ENCODE measurements at regions of chr1 and their contacts with region 1.

Region 1: DNA sequence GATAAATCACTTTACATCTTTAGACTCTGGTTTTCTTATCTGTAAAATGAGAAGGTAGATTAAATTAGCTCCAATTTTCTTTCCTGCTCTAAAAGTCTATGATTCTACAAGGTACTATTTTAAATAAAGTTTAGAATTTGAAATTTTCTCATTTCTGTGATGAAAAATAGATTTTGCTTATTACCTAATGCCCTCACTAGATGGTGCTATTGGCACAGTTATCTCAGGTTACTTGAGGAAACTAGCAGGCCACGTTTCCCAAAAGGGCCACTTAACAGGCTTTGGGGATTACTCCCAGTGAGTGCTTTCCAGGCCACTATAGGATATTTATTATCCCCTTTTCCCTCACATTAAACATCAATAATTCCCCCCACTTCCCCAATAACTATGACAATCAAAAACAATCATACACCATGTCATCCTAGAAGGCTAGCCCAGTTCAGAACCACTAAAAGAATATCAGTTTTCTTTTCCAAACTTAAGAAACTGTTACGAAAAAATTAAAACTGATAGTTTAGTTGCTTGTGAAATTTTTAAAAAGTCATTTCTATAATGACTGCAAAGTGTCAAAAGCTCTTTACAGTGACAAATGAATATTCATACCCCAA is 30.6 kb downstream of the OMA1 start:
- DNase-seq: peak; percentile 71 to 81 (median 78)
- H3K4me3 ChIP-seq: no peak overlapping the region
- H3K27ac ChIP-seq: no peak overlapping the region
- H3K4me1 ChIP-seq: no peaks in the 10 kb centered on the region
- H3K27me3 ChIP-seq: no peaks in the 10 kb centered on the region

Region 2: DNA sequence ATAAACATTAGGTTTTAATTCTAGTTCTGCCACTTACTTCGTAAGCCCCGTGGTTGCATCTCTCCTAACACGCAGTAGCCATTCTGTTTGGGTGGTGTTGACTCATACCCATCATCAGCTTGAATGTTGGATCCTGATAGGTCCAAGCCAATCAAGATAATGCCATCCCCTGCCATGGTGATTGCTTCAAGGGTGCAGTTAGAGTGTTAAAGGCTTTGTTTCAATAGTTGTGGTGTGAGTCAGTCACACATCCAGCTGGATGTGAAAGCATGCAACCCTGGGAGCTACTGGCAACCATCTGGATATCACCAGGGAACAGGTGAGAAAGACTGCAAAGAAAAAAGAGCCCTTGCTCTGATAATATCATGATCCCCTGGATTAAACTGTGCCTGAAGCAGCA is 38.5 kb before region 1 on chr1:
- CTCF ChIA-PET with region 1: no interaction called
- POLR2A ChIA-PET with region 1: no interaction called
- DNase-seq: no peak
- H3K4me3 ChIP-seq: no peak overlapping the region
- H3K27ac ChIP-seq: no peak overlapping the region
- H3K4me1 ChIP-seq: no peaks in the 10 kb centered on the region
- H3K27me3 ChIP-seq: no peaks in the 10 kb centered on the region

Region 3: DNA sequence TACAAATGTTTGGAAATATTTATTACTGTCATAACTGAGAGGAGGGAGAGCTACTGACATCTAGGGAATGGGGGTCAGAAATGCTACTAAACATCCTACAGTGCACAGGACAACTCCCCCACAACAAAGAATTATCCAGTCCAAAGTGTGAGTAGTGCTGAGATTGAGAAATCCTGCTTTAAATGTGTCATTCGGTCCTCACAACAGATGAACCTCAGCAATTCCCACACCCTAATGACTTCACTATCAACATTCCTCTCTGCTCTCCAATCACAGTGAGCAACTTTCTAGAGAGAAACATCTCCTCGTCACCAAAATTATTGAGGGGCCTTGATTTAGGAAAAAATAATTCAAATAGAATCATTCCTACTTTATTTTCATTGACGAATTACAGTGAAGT is 12.6 kb after region 1 on chr1:
- CTCF ChIA-PET with region 1: interaction called, 39 read pairs
- POLR2A ChIA-PET with region 1: no interaction called
- DNase-seq: no peak
- H3K4me3 ChIP-seq: no peak overlapping the region
- H3K27ac ChIP-seq: no peak overlapping the region
- H3K4me1 ChIP-seq: no peaks in the 10 kb centered on the region
- H3K27me3 ChIP-seq: no peaks in the 10 kb centered on the region

Region 4: DNA sequence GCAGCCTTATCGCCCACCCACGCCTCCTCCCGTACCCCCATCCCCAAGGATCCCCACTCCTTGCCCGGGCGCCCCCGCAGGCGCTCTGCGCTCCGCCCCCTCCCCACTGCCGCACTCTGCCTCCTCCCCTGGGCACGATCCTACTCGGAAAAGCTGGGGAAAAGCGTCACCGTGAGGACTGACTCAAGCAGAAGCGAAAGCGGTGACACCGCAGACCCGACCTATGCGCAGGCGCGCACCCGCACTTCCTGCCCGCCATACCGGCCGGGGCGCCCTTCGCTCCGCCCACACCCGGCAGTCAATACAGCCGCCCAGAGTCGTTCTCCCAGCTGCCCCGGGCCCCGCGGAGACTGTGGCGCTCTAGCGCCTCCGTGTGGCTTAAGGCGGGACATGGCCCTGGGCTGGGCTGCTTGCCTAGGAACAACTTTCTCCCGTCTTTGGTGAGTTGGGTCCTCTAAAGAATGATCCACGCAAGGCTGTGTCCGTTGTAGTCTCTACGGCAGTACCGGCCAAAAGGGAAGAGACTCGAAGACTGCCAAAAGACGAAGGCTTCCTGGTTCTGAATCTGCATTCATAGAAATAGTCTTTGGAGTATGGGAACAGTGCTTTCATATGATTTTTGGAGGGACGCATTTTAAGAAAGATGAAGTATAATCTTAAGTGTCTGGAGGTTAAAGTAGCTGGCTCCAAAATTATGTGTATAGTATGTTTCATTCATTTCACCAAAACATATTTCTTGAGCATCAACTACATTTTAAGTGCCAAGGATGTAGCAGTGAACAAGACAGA is 30.8 kb after region 1 on chr1 and contains the start of gene OMA1:
- CTCF ChIA-PET with region 1: interaction called, 28 read pairs
- POLR2A ChIA-PET with region 1: no interaction called
- DNase-seq: peak; percentile 97 to 99 (median 99)
- H3K4me3 ChIP-seq: peak within 1 kb of the TSS; percentile 68 to 90 (median 81)
- H3K27ac ChIP-seq: peak within 1 kb of the TSS; percentile 85 to 94
- H3K4me1 ChIP-seq: peaks cover 3 to 19% (median 11%) of the 10 kb centered on the region in 4 experiments
- H3K27me3 ChIP-seq: no peaks in the 10 kb centered on the region

Region 5: GRCh38 chr1:58652651-58653184 is 136.8 kb after region 1 on chr1:
- CTCF ChIA-PET with region 1: interaction called, 102 read pairs
- POLR2A ChIA-PET with region 1: no interaction called
- DNase-seq: peak; percentile 77 to 91 (median 87)
- H3K4me3 ChIP-seq: no peak overlapping the region
- H3K27ac ChIP-seq: no peak overlapping the region
- H3K4me1 ChIP-seq: peaks cover 0 to 17% (median 6%) of the 10 kb centered on the region in 4 experiments
- H3K27me3 ChIP-seq: no peaks in the 10 kb centered on the region

Region 6: GRCh38 chr1:58664881-58665280 is 149.0 kb after region 1 on chr1:
- CTCF ChIA-PET with region 1: interaction called, 20 read pairs
- POLR2A ChIA-PET with region 1: no interaction called
- DNase-seq: no peak
- H3K4me3 ChIP-seq: no peak overlapping the region
- H3K27ac ChIP-seq: no peak overlapping the region
- H3K4me1 ChIP-seq: no peaks in the 10 kb centered on the region
- H3K27me3 ChIP-seq: no peaks in the 10 kb centered on the region

Region 7: DNA sequence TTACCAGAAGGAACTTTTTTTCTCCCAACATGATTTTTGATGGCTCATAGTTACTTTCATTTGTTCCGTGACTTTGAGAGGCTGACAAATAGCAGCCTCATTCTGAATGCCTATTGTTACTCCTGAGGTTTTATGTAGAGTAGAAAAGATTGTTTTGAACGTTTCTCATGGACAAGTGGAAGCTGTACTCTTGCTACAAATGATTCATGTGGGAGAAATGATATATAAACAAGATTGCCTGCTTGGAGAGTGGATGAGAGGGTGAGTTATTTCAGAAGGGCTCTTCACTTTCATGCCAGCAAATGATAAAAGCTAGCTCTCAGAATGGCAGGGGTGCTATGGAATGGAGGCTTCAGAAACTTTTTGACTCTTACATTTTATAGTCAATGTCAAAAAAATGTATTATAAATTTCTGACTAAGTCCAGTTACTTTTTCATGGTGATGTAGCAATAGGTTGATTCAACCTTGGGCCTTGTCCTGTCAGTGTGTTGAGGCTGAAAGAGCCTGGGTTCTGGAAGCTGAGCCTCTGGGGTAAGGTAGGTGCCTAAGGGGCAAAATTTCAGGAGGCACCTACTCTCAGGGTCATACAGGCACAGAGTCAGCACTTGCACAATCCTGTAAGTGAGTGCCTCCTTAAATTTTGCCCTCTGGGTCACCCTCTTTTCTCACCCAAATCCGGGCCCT is 248.5 kb after region 1 on chr1:
- CTCF ChIA-PET with region 1: no interaction called
- POLR2A ChIA-PET with region 1: no interaction called
- DNase-seq: no peak
- H3K4me3 ChIP-seq: peak overlapping the region in 1 of 7 experiments; percentile 26
- H3K27ac ChIP-seq: no peak overlapping the region
- H3K4me1 ChIP-seq: peaks cover 5 to 20% (median 11%) of the 10 kb centered on the region in 4 experiments
- H3K27me3 ChIP-seq: no peaks in the 10 kb centered on the region

Region 8: GRCh38 chr1:59759156-59759925 is 1243.4 kb after region 1 on chr1:
- CTCF ChIA-PET with region 1: interaction called, 17 read pairs
- POLR2A ChIA-PET with region 1: no interaction called
- DNase-seq: peak; percentile 72 to 83 (median 79)
- H3K4me3 ChIP-seq: peak overlapping the region in 5 of 7 experiments; percentile 5 to 67 (median 41)
- H3K27ac ChIP-seq: no peak overlapping the region
- H3K4me1 ChIP-seq: peaks cover 0 to 7% (median 3%) of the 10 kb centered on the region in 4 experiments
- H3K27me3 ChIP-seq: no peaks in the 10 kb centered on the region